Activated CD4-positive, alpha-beta memory T cell treated with anti-CD3 and anti-CD28 coated beads for 36 hours (primary cell): ENCODE measurements at regions of chr5 and their contacts with region 1.

Region 1: GRCh38 chr5:156920042-156920860 is 42.8 kb downstream of the TIMD4 start:
- DNase-seq: peak; percentile 86
- H3K4me3 Mint-ChIP-seq: peak overlapping the region; percentile 48
- H3K27ac Mint-ChIP-seq: peak overlapping the region; percentile 85
- H3K4me1 Mint-ChIP-seq: peaks cover 43% of the 10 kb centered on the region
- H3K27me3 Mint-ChIP-seq: no peaks in the 10 kb centered on the region

Region 2: DNA sequence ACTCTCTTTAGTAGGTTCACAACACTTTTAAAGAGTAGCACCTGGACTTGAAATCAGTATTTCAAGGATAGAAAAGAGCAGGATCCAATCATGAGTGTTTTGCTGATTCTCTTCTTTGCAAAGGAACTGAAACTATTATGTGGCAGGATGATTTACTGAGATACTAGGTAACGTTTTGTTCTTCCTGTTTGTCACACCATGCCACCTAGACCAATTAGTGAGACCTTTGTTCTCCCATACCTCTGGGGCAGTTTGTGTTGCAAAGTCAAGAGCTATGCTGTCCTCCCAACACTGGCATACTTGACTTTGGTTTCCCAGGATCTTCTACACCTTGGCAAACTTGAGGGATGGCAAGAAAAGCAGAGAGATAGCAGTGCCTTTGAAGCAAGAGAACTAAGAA is 26.7 kb before region 1 on chr5:
- CTCF ChIA-PET with region 1: no interaction called
- POLR2A ChIA-PET with region 1: no interaction called
- intact Hi-C with region 1: loop called (anchors 1 kb)
- DNase-seq: no peak
- H3K4me3 Mint-ChIP-seq: no peak overlapping the region
- H3K27ac Mint-ChIP-seq: peak overlapping the region; percentile 18
- H3K4me1 Mint-ChIP-seq: peaks cover 33% of the 10 kb centered on the region
- H3K27me3 Mint-ChIP-seq: no peaks in the 10 kb centered on the region

Region 3: GRCh38 chr5:156907667-156908066 is 12.6 kb before region 1 on chr5:
- CTCF ChIA-PET with region 1: no interaction called
- POLR2A ChIA-PET with region 1: no interaction called
- intact Hi-C with region 1: no loop called
- DNase-seq: no peak
- H3K4me3 Mint-ChIP-seq: no peak overlapping the region
- H3K27ac Mint-ChIP-seq: no peak overlapping the region
- H3K4me1 Mint-ChIP-seq: peaks cover 6% of the 10 kb centered on the region
- H3K27me3 Mint-ChIP-seq: no peaks in the 10 kb centered on the region

Region 4: GRCh38 chr5:157026789-157027424 is 106.7 kb after region 1 on chr5:
- CTCF ChIA-PET with region 1: interaction called, 5 read pairs
- POLR2A ChIA-PET with region 1: interaction called, 14 read pairs
- intact Hi-C with region 1: loop called (anchors 1 kb)
- DNase-seq: peak; percentile 12
- H3K4me3 Mint-ChIP-seq: no peak overlapping the region
- H3K27ac Mint-ChIP-seq: no peak overlapping the region
- H3K4me1 Mint-ChIP-seq: peaks cover 36% of the 10 kb centered on the region
- H3K27me3 Mint-ChIP-seq: no peaks in the 10 kb centered on the region

Region 5: GRCh38 chr5:157130925-157131324 is 210.7 kb after region 1 on chr5:
- CTCF ChIA-PET with region 1: no interaction called
- POLR2A ChIA-PET with region 1: interaction called, 4 read pairs
- intact Hi-C with region 1: loop called (anchors 1 kb)
- DNase-seq: no peak
- H3K4me3 Mint-ChIP-seq: no peak overlapping the region
- H3K27ac Mint-ChIP-seq: no peak overlapping the region
- H3K4me1 Mint-ChIP-seq: peaks cover 23% of the 10 kb centered on the region
- H3K27me3 Mint-ChIP-seq: no peaks in the 10 kb centered on the region

Region 6: DNA sequence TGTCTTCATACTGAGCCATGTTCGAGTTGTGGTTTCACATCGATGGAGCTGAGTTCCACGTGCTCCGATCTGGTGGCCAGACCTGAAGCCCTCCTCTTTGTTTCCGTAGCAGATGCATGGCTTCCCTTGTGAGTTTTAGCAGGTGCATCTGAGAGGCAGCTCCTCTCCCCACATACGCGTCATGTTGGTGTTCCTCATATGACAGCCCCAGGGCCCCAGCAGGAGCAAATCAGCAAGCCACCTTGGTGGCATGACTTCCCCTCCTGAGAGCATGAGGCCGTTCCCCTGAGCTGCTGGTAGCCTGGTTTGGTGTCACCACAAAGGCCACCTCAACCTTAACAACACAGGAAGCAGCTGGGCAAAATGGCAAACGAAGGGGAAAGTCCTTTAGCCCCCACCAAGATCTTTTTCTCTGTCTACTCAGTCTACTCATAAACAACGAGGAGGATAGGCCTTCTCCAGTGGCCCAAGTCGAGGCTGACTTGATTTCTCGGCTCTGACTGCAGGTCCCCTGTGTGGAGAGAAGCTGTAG is 351.6 kb after region 1 on chr5:
- CTCF ChIA-PET with region 1: no interaction called
- POLR2A ChIA-PET with region 1: no interaction called
- intact Hi-C with region 1: loop called (anchors 5 kb)
- DNase-seq: peak; percentile 94
- H3K4me3 Mint-ChIP-seq: peak overlapping the region; percentile 69
- H3K27ac Mint-ChIP-seq: peak overlapping the region; percentile 97
- H3K4me1 Mint-ChIP-seq: peaks cover 86% of the 10 kb centered on the region
- H3K27me3 Mint-ChIP-seq: no peaks in the 10 kb centered on the region

Region 7: GRCh38 chr5:157603333-157604190 is 683.3 kb after region 1 on chr5:
- CTCF ChIA-PET with region 1: no interaction called
- POLR2A ChIA-PET with region 1: no interaction called
- intact Hi-C with region 1: loop called (anchors 10 kb)
- DNase-seq: peak; percentile 83
- H3K4me3 Mint-ChIP-seq: peak overlapping the region; percentile 18
- H3K27ac Mint-ChIP-seq: peak overlapping the region; percentile 90
- H3K4me1 Mint-ChIP-seq: peaks cover 93% of the 10 kb centered on the region
- H3K27me3 Mint-ChIP-seq: no peaks in the 10 kb centered on the region